Posterior vena cava (tissue), 2 donors: ENCODE measurements at regions of chr5 and their contacts with region 1.

Region 1: DNA sequence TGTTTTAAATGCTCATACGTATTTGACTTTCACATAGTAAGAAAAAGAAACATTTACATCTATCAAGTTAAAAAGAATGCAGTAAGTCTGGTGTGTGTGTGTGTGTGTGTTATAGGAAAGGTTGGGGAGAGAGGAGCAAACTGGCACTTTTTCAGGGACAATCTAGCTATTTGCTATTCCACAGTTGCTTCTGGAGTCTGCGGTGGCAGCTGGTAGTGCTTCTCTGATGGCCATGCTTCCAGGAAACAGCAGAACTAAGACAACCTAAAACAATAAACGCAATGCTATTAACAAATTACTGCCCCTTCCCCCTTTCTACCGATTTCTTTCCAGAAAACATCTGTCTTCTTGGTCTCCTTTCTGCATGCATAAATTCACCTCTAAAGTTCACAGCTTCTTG is 70.0 kb upstream of the CDH10 start:
- DNase-seq: no peak

Region 2: DNA sequence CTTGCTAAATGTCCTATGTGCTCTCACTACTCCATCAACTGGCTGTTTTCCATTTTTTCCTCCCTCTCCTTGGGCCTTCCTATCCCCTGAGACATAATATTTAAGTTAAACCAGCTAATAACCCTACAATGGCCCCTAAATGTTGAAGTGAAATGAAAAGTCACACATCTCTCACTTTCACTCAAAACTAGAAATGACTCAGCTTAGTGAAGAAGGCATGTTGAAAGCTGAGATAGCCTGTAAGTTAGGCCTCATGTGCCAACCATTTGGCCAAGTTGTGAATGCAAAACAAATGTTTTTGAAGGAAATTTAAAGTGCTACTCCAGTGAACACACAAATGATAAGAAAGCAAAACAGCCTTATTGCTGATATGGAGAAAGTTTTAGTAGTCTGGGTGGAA is 21.1 kb before region 1 on chr5:
- intact Hi-C with region 1: loop called in 1 of 2 experiments (anchors 1 kb)
- DNase-seq: no peak

Region 3: DNA sequence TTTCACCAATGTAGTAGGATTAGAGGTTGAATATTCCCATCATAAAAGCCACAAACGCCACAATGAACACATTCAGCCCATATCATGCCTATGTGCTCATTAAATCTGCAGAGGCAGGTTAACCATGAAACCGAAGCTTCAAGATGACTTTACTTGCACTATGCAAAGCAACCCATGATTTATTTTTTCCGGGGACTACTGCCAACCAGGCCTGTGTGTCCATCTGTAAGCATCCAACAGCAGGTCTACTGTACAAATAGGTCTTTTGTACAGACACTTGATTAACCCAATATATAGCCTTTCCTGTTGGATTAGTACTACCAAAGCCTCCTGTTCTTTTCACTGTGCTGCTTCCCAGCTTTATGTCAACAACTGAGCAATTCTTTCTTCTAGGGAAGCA is 35.0 kb after region 1 on chr5:
- intact Hi-C with region 1: loop called in 1 of 2 experiments (anchors 1 kb)
- DNase-seq: no peak

Region 4: GRCh38 chr5:25975885-25976284 is 1261.1 kb after region 1 on chr5:
- intact Hi-C with region 1: no loop called
- DNase-seq: no peak